Naive thymus-derived CD4-positive, alpha-beta T cell (primary cell): ENCODE measurements at regions of chr4 and their contacts with region 1.

Region 1: GRCh38 chr4:88284439-88285234 is at the start of gene PPM1K:
- DNase-seq: peak; percentile 98 to 100 (median 99)
- ATAC-seq: peak; percentile 92
- H3K4me3 ChIP-seq: peak within 1 kb of the TSS; percentile 87
- H3K4me3 Mint-ChIP-seq: peak within 1 kb of the TSS; percentile 90 to 99 (median 97)
- H3K27ac ChIP-seq: peak within 1 kb of the TSS; percentile 96
- H3K27ac Mint-ChIP-seq: peak within 1 kb of the TSS; percentile 92 to 100 (median 99)
- H3K4me1 ChIP-seq: peaks cover 21 to 30% of the 10 kb centered on the region in 2 donors
- H3K4me1 Mint-ChIP-seq: peaks cover 32 to 52% (median 47%) of the 10 kb centered on the region in 7 donors
- H3K27me3 ChIP-seq: no peaks in the 10 kb centered on the region
- H3K27me3 Mint-ChIP-seq: no peaks in the 10 kb centered on the region
- total RNA-seq, gene PPM1K: 72.1 to 92.7 (median 91.9) TPM

Region 2: GRCh38 chr4:86934771-86935565 is 1349.7 kb before region 1 on chr4 and contains the start of gene AFF1:
- CTCF ChIA-PET with region 1: no interaction called
- POLR2A ChIA-PET with region 1: no interaction called
- intact Hi-C with region 1: loop called (anchors 2 to 10 kb)
- DNase-seq: peak; percentile 74 to 91 (median 81)
- ATAC-seq: peak; percentile 90
- H3K4me3 ChIP-seq: peak within 1 kb of the TSS; percentile 91
- H3K4me3 Mint-ChIP-seq: peak within 1 kb of the TSS; percentile 92 to 97 (median 94)
- H3K27ac ChIP-seq: peak within 1 kb of the TSS; percentile 90
- H3K27ac Mint-ChIP-seq: peak within 1 kb of the TSS; percentile 91 to 97 (median 96)
- H3K4me1 ChIP-seq: peaks cover 29% of the 10 kb centered on the region in 2 donors
- H3K4me1 Mint-ChIP-seq: peaks cover 37 to 61% (median 53%) of the 10 kb centered on the region in 7 donors
- H3K27me3 ChIP-seq: no peaks in the 10 kb centered on the region
- H3K27me3 Mint-ChIP-seq: no peaks in the 10 kb centered on the region
- total RNA-seq, gene AFF1: 65.8 to 88.6 (median 78.7) TPM

Region 3: DNA sequence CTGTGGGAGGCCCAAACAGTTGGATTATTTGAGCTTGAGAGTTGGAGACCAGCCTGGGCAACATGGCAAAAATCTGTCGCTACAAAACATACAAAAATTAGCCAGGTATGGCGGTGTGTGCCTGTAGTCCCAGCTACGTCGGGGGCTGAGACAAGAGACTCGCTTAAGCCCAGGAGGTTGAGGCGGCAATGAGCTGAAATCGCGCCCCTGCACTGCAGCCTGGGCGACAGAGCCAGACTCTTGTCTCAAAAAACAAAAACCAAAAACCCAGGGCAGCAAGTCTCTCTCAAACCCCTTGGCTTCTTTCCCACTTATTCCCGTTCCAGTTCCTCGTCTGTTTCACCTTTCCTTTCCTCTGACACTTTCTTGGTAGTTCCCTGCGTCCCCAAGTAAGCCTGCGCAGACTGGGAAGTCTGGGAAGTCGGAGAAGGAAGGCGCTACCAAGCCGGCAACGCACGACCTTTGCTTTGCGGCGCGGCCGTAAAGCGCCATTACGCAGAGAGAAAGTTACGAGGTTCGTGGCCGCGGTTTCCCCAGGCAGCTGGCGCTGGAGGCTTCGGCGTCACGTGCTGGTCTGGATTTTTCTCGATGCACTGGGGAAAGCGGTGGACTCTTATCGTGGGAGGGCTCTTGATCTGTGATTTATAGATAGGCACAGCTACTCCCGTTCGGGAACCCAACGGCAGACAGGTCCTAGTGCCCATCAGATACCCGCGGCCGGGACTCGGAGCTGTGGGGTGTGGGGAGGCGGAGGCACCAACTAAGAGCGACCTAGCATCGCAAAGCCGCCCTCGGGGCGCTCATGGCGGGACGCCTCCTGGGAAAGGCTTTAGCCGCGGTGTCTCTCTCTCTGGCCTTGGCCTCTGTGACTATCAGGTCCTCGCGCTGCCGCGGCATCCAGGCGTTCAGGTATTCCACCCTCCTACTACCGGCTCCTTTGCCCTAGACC is 862.3 kb before region 1 on chr4 and contains the start of gene NUDT9:
- CTCF ChIA-PET with region 1: no interaction called
- POLR2A ChIA-PET with region 1: interaction called, 3 read pairs
- intact Hi-C with region 1: loop called (anchors 1 to 5 kb)
- DNase-seq: peak; percentile 74 to 92 (median 89)
- ATAC-seq: peak; percentile 92
- H3K4me3 ChIP-seq: peak within 1 kb of the TSS; percentile 96
- H3K4me3 Mint-ChIP-seq: peak within 1 kb of the TSS; percentile 94 to 100 (median 98)
- H3K27ac ChIP-seq: peak within 1 kb of the TSS; percentile 85
- H3K27ac Mint-ChIP-seq: peak within 1 kb of the TSS; percentile 97 to 100 (median 99)
- H3K4me1 ChIP-seq: peaks cover 17% of the 10 kb centered on the region in 2 donors
- H3K4me1 Mint-ChIP-seq: peaks cover 14 to 59% (median 48%) of the 10 kb centered on the region in 7 donors
- H3K27me3 ChIP-seq: no peaks in the 10 kb centered on the region
- H3K27me3 Mint-ChIP-seq: no peaks in the 10 kb centered on the region
- total RNA-seq, gene NUDT9: 9.7 to 18.1 (median 10.5) TPM

Region 4: GRCh38 chr4:88130544-88131305 is 153.9 kb before region 1 on chr4:
- CTCF ChIA-PET with region 1: no interaction called
- POLR2A ChIA-PET with region 1: no interaction called
- intact Hi-C with region 1: no loop called
- DNase-seq: no peak
- ATAC-seq: no peak
- H3K4me3 ChIP-seq: no peak overlapping the region
- H3K4me3 Mint-ChIP-seq: no peak overlapping the region
- H3K27ac ChIP-seq: no peak overlapping the region
- H3K27ac Mint-ChIP-seq: peak overlapping the region in 1 of 9 donors; percentile 15
- H3K4me1 ChIP-seq: no peaks in the 10 kb centered on the region
- H3K4me1 Mint-ChIP-seq: no peaks in the 10 kb centered on the region
- H3K27me3 ChIP-seq: no peaks in the 10 kb centered on the region
- H3K27me3 Mint-ChIP-seq: peaks cover 1 to 14% (median 6%) of the 10 kb centered on the region in 5 donors

Region 5: DNA sequence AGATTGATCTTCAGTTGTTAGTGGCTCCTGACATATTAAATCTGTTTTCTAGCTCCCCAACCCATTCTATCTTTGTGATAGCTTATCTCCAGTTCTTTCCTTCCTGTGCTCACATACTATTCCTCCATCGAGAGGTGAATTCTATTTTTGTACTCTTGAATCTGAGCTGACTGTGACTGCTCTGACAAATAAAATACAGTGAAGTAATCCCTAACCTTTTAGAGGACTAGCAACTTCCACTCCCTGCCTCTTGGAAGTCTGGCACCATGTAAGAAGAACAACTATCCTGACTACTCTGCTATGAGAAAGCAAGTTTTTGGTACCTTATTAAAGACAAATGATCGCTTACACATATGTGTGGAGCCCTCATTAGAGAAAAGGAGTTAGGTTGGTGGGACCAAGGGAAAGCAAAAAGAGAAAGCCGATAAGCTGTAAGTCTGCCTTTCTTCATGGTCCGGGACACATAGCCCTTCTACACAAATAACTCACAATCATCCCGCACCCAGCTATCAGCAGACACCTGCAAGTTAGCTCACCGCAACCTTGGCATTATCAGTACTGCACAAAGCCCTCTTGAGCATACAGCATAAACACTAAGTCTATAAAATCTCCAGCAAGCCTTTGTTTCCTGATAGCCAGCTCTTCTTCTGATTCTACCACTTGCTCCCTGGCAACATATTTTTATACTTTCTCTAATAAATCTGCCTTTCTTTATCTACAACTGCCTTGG is 13.3 kb after region 1 on chr4:
- CTCF ChIA-PET with region 1: interaction called, 3 read pairs
- POLR2A ChIA-PET with region 1: interaction called, 17 read pairs
- intact Hi-C with region 1: no loop called
- DNase-seq: no peak
- ATAC-seq: no peak
- H3K4me3 ChIP-seq: no peak overlapping the region
- H3K4me3 Mint-ChIP-seq: no peak overlapping the region
- H3K27ac ChIP-seq: no peak overlapping the region
- H3K27ac Mint-ChIP-seq: no peak overlapping the region
- H3K4me1 ChIP-seq: no peaks in the 10 kb centered on the region
- H3K4me1 Mint-ChIP-seq: no peaks in the 10 kb centered on the region
- H3K27me3 ChIP-seq: no peaks in the 10 kb centered on the region
- H3K27me3 Mint-ChIP-seq: no peaks in the 10 kb centered on the region

Region 6: DNA sequence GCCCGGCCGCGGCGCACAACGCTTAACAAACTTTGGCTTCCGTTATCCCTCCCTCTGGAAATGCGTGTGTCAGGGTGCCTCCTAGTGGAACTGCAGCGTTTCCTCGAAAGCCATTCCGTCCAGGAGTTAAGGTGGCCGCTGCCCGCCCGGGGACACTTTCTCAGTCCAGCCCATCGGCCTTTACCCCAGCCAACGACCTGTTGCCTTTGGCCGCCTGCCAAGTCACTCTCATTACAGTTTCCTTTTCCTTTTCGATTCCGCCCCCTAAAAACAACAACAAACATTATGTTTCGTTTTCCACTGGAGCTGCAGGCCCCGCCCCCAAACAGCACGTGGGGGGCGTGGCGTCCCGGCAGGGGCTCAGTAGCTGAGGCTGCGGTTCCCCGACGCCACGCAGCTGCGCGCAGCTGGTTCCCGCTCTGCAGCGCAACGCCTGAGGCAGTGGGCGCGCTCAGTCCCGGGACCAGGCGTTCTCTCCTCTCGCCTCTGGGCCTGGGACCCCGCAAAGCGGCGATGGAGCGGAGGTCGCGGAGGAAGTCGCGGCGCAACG is 172.2 kb after region 1 on chr4 and contains the start of gene HERC5:
- CTCF ChIA-PET with region 1: interaction called, 7 read pairs
- POLR2A ChIA-PET with region 1: interaction called, 54 read pairs
- intact Hi-C with region 1: loop called (anchors 1 kb)
- DNase-seq: peak; percentile 90 to 94 (median 92)
- ATAC-seq: peak; percentile 98
- H3K4me3 ChIP-seq: peak within 1 kb of the TSS; percentile 100
- H3K4me3 Mint-ChIP-seq: peak within 1 kb of the TSS; percentile 87 to 100 (median 98)
- H3K27ac ChIP-seq: peak within 1 kb of the TSS; percentile 72
- H3K27ac Mint-ChIP-seq: peak within 1 kb of the TSS; percentile 94 to 100 (median 99)
- H3K4me1 ChIP-seq: peaks cover 5 to 6% of the 10 kb centered on the region in 2 donors
- H3K4me1 Mint-ChIP-seq: peaks cover 10 to 52% (median 37%) of the 10 kb centered on the region in 7 donors
- H3K27me3 ChIP-seq: no peaks in the 10 kb centered on the region
- H3K27me3 Mint-ChIP-seq: no peaks in the 10 kb centered on the region
- total RNA-seq, gene HERC5: 11.8 to 52.5 (median 14.1) TPM

Region 7: DNA sequence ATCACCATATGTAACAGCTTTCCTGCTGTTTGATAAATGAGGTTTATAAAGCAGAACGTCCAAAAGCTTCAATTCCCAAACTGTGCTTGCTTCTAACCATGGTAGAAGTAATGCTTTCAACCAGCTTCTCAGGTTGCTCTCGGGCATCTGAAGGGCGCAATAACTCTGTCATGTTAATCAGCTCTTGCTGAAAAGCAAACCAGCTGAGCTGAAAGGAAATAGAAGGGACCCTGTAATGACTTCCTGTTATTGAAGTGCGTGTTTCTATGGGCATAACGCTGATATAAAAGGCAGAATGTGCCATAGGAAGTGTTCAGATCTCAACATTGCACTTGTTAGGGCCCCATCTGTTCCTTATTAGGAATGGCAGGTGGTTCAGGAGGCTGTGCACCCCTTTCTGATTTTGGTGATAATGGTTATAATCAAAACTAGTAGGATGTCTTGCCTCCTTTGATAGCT is 328.8 kb after region 1 on chr4:
- CTCF ChIA-PET with region 1: no interaction called
- POLR2A ChIA-PET with region 1: interaction called, 10 read pairs
- intact Hi-C with region 1: loop called in 1 of 2 experiments (anchors 1 kb)
- DNase-seq: peak in 7 of 9 donors; percentile 71 to 91 (median 85)
- ATAC-seq: peak; percentile 94
- H3K4me3 ChIP-seq: peak overlapping the region; percentile 43
- H3K4me3 Mint-ChIP-seq: peak overlapping the region; percentile 64 to 92 (median 84)
- H3K27ac ChIP-seq: peak overlapping the region; percentile 77
- H3K27ac Mint-ChIP-seq: peak overlapping the region; percentile 91 to 99 (median 99)
- H3K4me1 ChIP-seq: peaks cover 28 to 55% of the 10 kb centered on the region in 2 donors
- H3K4me1 Mint-ChIP-seq: peaks cover 50 to 98% (median 86%) of the 10 kb centered on the region in 7 donors
- H3K27me3 ChIP-seq: no peaks in the 10 kb centered on the region
- H3K27me3 Mint-ChIP-seq: no peaks in the 10 kb centered on the region

Region 8: GRCh38 chr4:89294573-89295269 is 1010.1 kb after region 1 on chr4:
- CTCF ChIA-PET with region 1: no interaction called
- POLR2A ChIA-PET with region 1: no interaction called
- intact Hi-C with region 1: loop called in 1 of 2 experiments (anchors 2 kb)
- DNase-seq: peak in 7 of 9 donors; percentile 62 to 88 (median 81)
- ATAC-seq: peak; percentile 86
- H3K4me3 ChIP-seq: peak overlapping the region; percentile 21
- H3K4me3 Mint-ChIP-seq: peak overlapping the region; percentile 38 to 83 (median 73)
- H3K27ac ChIP-seq: peak overlapping the region; percentile 69
- H3K27ac Mint-ChIP-seq: peak overlapping the region; percentile 81 to 97 (median 94)
- H3K4me1 ChIP-seq: peaks cover 73 to 82% of the 10 kb centered on the region in 2 donors
- H3K4me1 Mint-ChIP-seq: peaks cover 57 to 99% (median 86%) of the 10 kb centered on the region in 7 donors
- H3K27me3 ChIP-seq: no peaks in the 10 kb centered on the region
- H3K27me3 Mint-ChIP-seq: no peaks in the 10 kb centered on the region